Posterior vena cava (tissue), 2 donors: ENCODE measurements at regions of chr9 and their contacts with region 1.

Region 1: DNA sequence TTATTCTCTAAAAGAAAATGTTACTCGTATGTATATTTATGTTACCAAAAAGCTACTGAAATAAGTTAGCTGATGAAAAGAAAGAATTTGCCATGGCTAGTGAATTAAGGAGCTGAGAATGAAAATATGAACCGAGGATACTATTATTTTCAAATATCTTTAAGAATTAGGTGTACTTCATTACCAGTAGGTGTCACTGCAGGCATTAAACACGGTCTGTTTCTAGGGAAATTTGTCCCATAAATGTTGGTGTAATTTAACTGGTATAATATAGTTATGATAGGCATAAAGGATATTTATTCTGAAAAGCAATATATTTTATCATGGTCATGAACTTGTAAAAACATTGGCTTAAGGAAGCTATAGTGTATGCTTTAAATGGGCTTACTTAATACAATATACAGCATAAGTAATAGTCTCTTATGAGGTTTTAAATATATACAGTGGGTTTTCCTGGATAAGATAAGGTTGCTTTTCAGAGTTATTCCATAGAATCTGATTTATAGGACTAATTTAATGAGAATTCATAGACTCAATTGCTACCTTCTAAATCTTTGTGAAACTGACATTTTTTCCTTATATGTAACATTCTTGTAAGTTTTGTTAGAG is 72.4 kb upstream of the MPDZ start:
- DNase-seq: no peak

Region 2: GRCh38 chr9:13410566-13411031 is 58.7 kb after region 1 on chr9:
- intact Hi-C with region 1: loop called in 1 of 2 experiments (anchors 10 kb)
- DNase-seq: no peak

Region 3: GRCh38 chr9:14353222-14354056 is 1001.6 kb after region 1 on chr9:
- intact Hi-C with region 1: loop called in 1 of 2 experiments (anchors 10 kb)
- DNase-seq: peak; percentile 97

Region 4: GRCh38 chr9:14652729-14653377 is 1301.0 kb after region 1 on chr9:
- intact Hi-C with region 1: no loop called
- DNase-seq: no peak